ENCODE measurements at regions of chrX and their contacts with region 1.

Region 1: DNA sequence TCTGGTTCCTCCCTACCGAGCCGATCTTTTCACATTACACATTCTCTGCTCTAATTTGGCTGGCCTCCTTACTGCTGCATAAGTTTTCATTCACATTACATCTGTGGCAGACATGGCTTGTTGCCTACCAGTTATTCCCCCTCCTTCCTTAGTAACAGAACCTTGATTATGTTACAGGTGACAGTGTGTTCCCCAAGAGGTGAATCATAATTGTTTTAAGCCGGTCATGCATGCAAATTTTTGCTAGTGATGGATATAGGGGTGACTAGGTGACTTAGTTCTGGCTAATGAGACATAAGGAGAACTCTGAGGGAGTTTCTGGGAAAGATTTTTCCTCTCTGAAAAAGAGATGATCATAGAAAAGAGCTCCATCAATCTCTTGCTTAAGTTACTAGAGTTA is 8.4 kb upstream of the LAMP2 start:
- DNase-seq: no peak
- ATAC-seq: no peak
- H3K4me3 ChIP-seq: no peak overlapping the region
- H3K4me3 Mint-ChIP-seq: no peak overlapping the region
- H3K27ac ChIP-seq: no peak overlapping the region
- H3K27ac Mint-ChIP-seq: no peak overlapping the region
- H3K4me1 ChIP-seq: no peaks in the 10 kb centered on the region
- H3K4me1 Mint-ChIP-seq: no peaks in the 10 kb centered on the region
- H3K27me3 ChIP-seq: no peaks in the 10 kb centered on the region
- H3K27me3 Mint-ChIP-seq: peaks cover 2 to 8% of the 10 kb centered on the region in 2 donors
- CTCF ChIP-seq: no peak

Region 2: DNA sequence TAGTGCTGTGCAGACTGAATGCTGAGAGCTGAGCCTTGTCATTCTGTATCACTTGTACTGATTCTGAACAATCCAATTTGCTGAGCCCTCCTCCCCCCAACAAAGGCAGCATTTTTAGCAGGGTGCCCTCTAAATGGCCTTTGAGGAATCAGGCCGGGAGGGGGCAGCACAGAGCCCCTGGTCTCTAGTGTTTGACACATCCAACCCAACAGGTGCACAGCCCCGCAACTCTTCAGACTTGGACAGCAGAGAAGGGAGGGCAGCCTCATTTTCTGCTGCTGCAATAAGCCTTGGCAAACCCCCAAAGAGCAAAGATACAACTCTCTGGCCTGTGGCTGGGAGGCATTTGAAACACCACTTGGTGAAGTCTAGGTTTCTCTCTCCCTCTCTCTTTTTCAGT is 112.1 kb before region 1 on chrX:
- intact Hi-C with region 1: loop called (anchors 10 kb)
- DNase-seq: peak; percentile 21 to 59
- ATAC-seq: peak in 2 of 3 donors; percentile 36 to 61
- H3K4me3 ChIP-seq: no peak overlapping the region
- H3K4me3 Mint-ChIP-seq: no peak overlapping the region
- H3K27ac ChIP-seq: no peak overlapping the region
- H3K27ac Mint-ChIP-seq: no peak overlapping the region
- H3K4me1 ChIP-seq: no peaks in the 10 kb centered on the region
- H3K4me1 Mint-ChIP-seq: no peaks in the 10 kb centered on the region
- H3K27me3 ChIP-seq: no peaks in the 10 kb centered on the region
- H3K27me3 Mint-ChIP-seq: peaks cover 0 to 16% of the 10 kb centered on the region in 2 donors
- CTCF ChIP-seq: peak; percentile 19

Region 3: GRCh38 chrX:120380699-120381098 is 96.8 kb before region 1 on chrX:
- intact Hi-C with region 1: loop called (anchors 1 kb)
- DNase-seq: peak in 1 of 2 donors; percentile 70
- ATAC-seq: peak; percentile 44 to 63 (median 59)
- H3K4me3 ChIP-seq: no peak overlapping the region
- H3K4me3 Mint-ChIP-seq: no peak overlapping the region
- H3K27ac ChIP-seq: no peak overlapping the region
- H3K27ac Mint-ChIP-seq: no peak overlapping the region
- H3K4me1 ChIP-seq: no peaks in the 10 kb centered on the region
- H3K4me1 Mint-ChIP-seq: no peaks in the 10 kb centered on the region
- H3K27me3 ChIP-seq: no peaks in the 10 kb centered on the region
- H3K27me3 Mint-ChIP-seq: peaks cover 6 to 25% of the 10 kb centered on the region in 2 donors
- CTCF ChIP-seq: no peak